Posterior cingulate gyrus (tissue), 11 donors: ENCODE measurements at regions of chr12 and their contacts with region 1.

Region 1: GRCh38 chr12:132310181-132311024 is 19.0 kb downstream of the GALNT9 start:
- DNase-seq: peak in 7 of 10 donors; percentile 24 to 88 (median 49)

Region 2: GRCh38 chr12:132356691-132357622 is 46.6 kb after region 1 on chr12:
- intact Hi-C with region 1: loop called (anchors 2 kb)
- DNase-seq: peak in 9 of 10 donors; percentile 28 to 96 (median 84)